Activated T-helper 2 cell treated with anti-CD3 and anti-CD28 coated beads, Interferon-gamma antibody, Interleukin-2, Interleukin-4, amounts not matched to agents 10 μg/mL and 5 μg/mL and 100 μg/mL, durations not matched to agents 14 hours and 24 hours and 36 hours (primary cell): ENCODE measurements at regions of chr3 and their contacts with region 1.

Region 1: GRCh38 chr3:131036200-131036816 is 9.6 kb downstream of the NEK11 start:
- DNase-seq: no peak
- H3K4me3 Mint-ChIP-seq: no peak overlapping the region
- H3K27ac Mint-ChIP-seq: no peak overlapping the region
- H3K4me1 Mint-ChIP-seq: peaks cover 13% of the 10 kb centered on the region
- H3K27me3 Mint-ChIP-seq: peaks cover 7% of the 10 kb centered on the region

Region 2: DNA sequence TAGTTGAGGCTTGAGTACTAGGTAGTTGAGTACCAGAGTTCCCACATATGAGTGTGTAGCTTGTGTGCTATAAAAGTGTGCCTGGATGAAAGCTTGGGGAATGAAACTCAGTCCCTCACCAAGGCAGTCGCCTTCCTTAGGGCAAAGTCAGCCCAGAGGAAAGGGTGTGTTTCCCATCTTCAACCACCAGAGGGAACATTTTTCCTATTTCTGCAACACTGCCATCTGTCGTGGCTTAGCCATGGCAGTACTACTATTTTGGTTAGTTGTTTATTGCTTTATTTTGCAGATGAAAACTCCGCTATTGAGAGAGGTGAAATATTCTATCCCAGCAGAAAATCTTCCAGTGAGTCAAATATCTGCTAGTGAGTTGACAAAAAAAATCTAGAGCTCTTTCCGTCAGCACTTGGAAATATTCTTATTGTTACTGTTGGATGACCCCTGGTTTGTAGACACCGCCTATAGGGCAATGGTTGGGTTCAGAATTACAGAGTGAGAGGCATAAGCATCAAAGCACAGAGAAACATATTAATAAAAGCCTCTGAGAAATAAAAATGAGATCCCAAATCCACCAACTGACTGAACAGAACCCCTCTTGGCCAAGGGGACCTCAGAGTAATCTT is 758.6 kb after region 1 on chr3:
- intact Hi-C with region 1: loop called (anchors 5 kb)
- DNase-seq: no peak
- H3K4me3 Mint-ChIP-seq: no peak overlapping the region
- H3K27ac Mint-ChIP-seq: no peak overlapping the region
- H3K4me1 Mint-ChIP-seq: peaks cover 11% of the 10 kb centered on the region
- H3K27me3 Mint-ChIP-seq: peaks cover 10% of the 10 kb centered on the region